Activated naive CD4-positive, alpha-beta T cell treated with anti-CD3 and anti-CD28 coated beads for 36 hours (primary cell): ENCODE measurements at regions of chr2 and their contacts with region 1.

Region 1: DNA sequence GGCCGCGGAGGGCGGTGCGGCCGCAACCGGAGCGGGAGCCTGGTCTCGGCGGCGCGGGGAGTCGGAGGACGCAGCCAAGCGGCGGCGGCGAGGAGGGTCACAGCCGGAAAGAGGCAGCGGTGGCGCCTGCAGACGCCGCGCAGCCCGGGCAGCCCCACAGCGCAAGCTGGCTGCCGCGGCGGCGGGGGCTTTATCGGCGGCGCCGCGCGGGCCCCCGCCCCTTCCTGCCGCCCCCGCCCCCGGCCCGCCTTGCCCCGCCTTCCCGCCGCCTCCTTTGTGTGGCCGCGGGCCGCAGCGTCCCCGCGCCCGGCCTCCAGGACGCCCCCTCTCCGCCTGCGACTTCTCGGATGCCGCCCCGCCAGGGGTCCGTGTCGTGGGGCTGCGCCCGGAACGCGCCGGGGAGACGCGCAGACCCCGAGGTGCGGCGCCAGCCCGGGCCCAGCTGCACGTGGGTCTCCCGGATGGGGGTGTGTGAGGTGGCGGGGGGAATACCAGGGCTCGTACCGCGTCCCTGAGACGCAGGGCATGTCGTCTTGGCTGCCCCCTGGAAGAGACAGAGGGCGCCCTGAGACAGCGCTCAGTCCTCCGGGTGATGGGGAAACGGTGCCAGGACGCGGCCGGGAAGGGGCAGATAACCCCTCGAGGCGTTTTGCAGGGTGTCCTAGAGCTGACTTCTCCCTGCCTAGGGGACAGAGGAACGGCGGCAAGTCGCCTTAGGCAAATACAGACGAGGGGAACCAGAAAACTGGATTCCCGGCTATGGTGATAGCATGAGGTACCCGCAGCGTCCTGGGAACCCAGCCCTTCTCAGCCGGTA is at the start of gene SERPINE2:
- DNase-seq: peak; percentile 81
- H3K4me3 Mint-ChIP-seq: peak within 1 kb of the TSS; percentile 93
- H3K27ac Mint-ChIP-seq: peak within 1 kb of the TSS; percentile 76
- H3K4me1 Mint-ChIP-seq: peaks cover 30% of the 10 kb centered on the region
- H3K27me3 Mint-ChIP-seq: peaks cover 29% of the 10 kb centered on the region
- total RNA-seq, gene SERPINE2: 64.6 to 69.5 TPM

Region 2: GRCh38 chr2:223598994-223599639 is 440.2 kb before region 1 on chr2:
- CTCF ChIA-PET with region 1: no interaction called
- intact Hi-C with region 1: no loop called
- DNase-seq: no peak
- H3K4me3 Mint-ChIP-seq: no peak overlapping the region
- H3K27ac Mint-ChIP-seq: no peak overlapping the region
- H3K4me1 Mint-ChIP-seq: peaks cover 3% of the 10 kb centered on the region
- H3K27me3 Mint-ChIP-seq: peaks cover 4% of the 10 kb centered on the region

Region 3: DNA sequence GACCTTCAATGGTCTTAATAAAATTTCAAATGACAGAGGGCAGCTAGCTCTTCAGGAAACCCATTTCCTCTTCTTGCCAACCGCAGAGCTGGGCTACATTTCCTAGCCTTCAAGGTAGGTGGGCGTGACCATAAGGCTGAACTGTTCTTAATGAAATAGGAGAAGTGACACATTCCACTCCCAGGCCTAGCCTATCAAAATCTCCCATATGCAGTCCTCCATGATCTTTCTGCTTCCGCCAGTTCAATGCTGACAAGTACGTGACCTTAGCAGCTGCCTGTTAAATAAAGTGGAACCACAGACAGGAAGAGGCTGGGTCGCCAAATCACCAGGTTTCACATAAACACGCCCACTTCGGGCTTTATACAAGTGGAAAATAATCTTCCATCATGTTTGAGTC is 13.5 kb before region 1 on chr2:
- CTCF ChIA-PET with region 1: interaction called, 3 read pairs
- intact Hi-C with region 1: loop called (anchors 1 kb)
- DNase-seq: peak; percentile 84
- H3K4me3 Mint-ChIP-seq: peak overlapping the region; percentile 64
- H3K27ac Mint-ChIP-seq: peak overlapping the region; percentile 95
- H3K4me1 Mint-ChIP-seq: peaks cover 84% of the 10 kb centered on the region
- H3K27me3 Mint-ChIP-seq: no peaks in the 10 kb centered on the region

Region 4: DNA sequence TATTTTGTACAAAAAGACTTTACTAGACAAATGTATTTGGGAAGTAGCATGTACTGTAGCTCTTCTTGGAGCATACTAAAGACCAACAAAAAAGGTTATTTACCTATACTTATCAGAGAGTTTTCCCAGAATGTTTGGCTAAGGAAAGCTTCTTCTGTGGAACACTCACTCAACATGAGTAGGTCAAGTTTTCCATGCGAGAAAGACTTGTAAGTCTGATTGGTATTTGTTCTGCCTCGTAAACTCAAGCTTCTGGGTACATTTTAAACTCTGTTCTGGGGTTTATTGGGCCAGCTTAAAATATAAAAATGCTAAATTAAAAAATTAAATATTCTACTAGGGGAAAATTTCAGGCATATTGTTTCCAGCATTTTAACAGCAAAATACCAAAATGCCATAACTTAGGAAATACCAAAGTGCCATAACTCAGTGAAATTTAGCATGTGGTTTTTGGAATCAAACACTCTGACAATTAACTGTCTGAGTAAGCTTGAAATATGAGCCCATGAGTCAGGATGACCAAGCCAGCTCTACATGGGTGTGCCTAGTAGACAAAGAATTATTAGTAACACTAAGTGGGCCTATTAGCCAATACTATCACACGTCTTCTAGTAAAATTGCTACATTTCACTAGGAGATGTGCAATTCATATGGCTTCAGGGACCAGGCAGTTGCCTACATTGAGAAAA is 47.0 kb after region 1 on chr2:
- CTCF ChIA-PET with region 1: no interaction called
- intact Hi-C with region 1: no loop called
- DNase-seq: no peak
- H3K4me3 Mint-ChIP-seq: no peak overlapping the region
- H3K27ac Mint-ChIP-seq: no peak overlapping the region
- H3K4me1 Mint-ChIP-seq: peaks cover 9% of the 10 kb centered on the region
- H3K27me3 Mint-ChIP-seq: no peaks in the 10 kb centered on the region

Region 5: GRCh38 chr2:224178056-224178455 is 138.7 kb after region 1 on chr2:
- CTCF ChIA-PET with region 1: no interaction called
- intact Hi-C with region 1: no loop called
- DNase-seq: no peak
- H3K4me3 Mint-ChIP-seq: no peak overlapping the region
- H3K27ac Mint-ChIP-seq: no peak overlapping the region
- H3K4me1 Mint-ChIP-seq: no peaks in the 10 kb centered on the region
- H3K27me3 Mint-ChIP-seq: peaks cover 6% of the 10 kb centered on the region

Region 6: DNA sequence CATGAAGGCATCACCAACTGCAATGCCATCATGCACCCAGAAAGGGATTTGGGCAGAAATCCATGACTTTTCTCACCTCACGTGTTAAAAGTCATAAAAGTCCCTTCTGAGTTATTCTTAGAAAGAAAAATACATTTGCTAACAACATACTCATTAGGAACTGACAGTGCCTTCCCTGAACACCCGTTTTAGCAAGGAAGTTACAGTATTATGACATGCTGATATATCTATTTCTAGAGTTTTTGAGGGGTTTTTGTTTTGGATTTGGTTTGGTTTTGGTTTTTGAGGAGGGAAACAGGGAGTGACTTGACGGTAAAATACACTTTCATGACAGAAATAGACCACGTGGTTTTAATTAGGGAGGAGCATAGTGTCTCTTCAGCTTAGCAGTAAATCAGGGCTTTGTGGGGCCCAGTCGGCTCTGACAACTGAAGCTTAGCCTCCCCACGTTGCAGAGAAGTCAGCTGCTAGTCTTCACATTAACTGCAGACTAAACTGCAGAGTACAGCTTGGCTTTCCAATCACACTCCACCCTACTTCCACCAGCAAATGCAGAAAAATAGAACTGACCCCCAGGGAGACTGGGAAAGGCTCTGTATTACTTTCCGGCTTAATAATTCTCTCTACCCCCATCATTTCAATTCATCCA is 221.2 kb after region 1 on chr2:
- CTCF ChIA-PET with region 1: interaction called, 3 read pairs
- intact Hi-C with region 1: loop called (anchors 2 kb)
- DNase-seq: peak; percentile 39
- H3K4me3 Mint-ChIP-seq: no peak overlapping the region
- H3K27ac Mint-ChIP-seq: peak overlapping the region; percentile 20
- H3K4me1 Mint-ChIP-seq: peaks cover 9% of the 10 kb centered on the region
- H3K27me3 Mint-ChIP-seq: peaks cover 13% of the 10 kb centered on the region

Region 7: DNA sequence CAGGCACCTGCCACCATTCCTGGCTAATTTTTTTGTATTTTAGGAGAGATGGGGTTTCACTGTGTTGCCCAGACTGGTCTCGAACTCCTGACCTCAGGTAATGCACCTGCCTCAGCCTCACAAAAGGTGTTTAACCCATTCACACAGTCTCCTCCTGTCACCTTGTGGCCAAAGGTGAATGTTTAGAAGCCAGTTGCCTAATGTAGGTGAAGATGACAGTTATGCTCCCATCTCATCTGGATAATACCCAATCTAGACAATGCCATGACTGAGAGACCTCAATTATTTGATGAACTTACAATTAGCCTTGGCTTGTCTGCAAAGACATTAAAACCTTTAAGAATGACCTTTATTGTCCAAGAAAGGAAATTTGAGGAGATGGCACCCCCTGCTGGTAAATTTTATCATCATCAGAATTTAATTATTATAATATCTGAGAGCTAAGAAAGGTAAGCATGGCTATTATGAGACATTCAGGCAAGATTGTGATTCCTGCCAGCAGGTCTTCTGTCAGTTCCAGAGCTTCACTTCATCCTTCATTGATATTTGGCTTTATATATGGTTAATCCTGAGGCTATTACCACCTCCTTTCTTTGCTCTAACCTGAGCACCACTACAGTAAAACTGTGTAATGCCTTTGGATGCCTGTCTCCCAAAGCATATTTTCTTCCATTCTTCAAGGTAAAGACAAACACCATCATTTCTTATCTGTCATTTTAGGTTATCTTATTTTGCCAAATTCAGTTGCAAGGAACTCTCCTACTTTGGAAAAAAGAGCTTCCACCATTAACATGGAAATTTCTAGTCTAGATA is 245.0 kb after region 1 on chr2:
- CTCF ChIA-PET with region 1: interaction called, 9 read pairs
- intact Hi-C with region 1: loop called (anchors 1 kb)
- DNase-seq: peak; percentile 50
- H3K4me3 Mint-ChIP-seq: no peak overlapping the region
- H3K27ac Mint-ChIP-seq: no peak overlapping the region
- H3K4me1 Mint-ChIP-seq: no peaks in the 10 kb centered on the region
- H3K27me3 Mint-ChIP-seq: peaks cover 25% of the 10 kb centered on the region